ENCODE measurements at regions of chr5 and their contacts with region 1.

Region 1: DNA sequence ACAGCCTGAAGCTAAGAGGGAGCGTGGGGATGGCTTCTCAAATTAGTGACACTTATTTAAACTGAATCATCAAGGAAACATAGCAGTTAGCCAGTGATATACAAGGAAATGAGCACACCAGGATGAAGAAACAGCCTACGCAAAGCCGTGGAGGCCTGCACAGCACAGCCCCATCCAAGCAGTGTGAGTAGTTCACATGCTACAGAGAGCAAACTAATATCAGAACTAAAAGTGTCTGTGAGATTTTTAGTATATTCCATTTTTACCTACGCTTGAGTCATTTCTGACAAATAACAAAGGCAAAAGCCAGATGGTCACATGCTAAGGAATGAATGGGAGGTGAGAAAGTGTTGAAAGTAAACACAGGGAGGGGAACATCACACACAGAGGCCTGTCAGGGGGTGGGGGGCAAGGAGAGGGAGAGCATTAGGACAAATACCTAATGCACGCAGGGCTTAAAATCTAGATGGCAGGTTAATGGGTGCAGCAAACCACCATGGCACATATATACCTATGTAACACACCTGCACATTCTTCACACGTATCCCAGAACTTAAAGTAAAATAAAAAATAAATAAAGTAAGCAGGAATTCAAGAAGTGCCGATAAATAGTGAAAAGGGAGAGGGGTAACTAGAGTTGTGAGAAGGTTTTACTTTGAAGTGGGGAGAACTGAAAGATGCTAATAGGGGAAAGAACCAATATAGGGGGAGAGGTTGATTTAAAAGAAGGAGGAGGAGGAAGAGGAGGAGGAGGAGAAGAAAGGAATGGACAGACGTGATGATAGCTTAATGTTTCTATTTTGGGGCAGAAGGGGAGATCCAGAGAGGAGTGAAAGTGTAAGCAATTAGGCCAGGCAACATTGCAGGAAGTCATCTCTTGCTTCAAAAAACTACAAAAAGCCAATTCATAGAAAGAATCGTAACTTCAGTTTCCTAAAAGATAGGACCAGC is 100.9 kb upstream of the PTGER4 start:
- DNase-seq: peak; percentile 19
- H3K4me3 Mint-ChIP-seq: peak overlapping the region; percentile 59
- H3K27ac Mint-ChIP-seq: peak overlapping the region; percentile 87
- H3K4me1 Mint-ChIP-seq: peaks cover 36% of the 10 kb centered on the region
- H3K27me3 Mint-ChIP-seq: no peaks in the 10 kb centered on the region

Region 2: DNA sequence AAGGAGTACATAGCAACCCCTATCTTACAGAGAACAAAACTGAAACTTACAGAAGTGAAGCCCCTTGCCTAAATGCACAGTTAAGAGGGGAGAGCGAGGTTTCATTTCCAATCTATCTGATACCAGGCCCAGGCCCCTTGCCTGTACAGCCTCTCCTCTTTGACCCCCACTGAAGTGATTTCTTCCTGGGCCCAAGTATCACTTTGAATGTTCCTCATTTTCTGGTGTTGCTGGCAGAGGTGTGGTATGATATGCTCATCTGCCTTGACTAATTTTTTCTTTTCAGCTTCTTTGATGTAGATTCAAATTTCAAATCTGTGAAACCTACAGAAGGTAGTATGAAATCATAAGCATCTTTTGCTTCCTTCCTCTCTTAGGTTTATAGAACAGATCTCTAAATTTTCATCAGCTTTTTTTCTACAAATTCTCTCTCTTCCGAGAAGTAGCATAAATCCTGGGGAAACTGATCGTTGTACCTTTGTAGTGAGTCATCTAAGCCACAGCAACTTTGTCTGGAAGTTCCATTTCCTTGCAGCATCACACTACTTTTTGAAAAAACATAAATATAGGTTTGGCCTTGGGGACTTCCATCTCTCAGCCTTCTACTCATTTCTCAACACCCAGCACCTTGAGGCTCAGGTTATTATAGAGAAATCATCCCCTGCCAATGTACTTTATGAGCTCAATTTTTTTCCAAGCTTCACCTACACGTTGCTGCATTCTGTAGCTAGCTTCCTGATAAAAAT is 301.4 kb before region 1 on chr5:
- intact Hi-C with region 1: loop called (anchors 1 kb)
- DNase-seq: peak; percentile 22
- H3K4me3 Mint-ChIP-seq: peak overlapping the region; percentile 5
- H3K27ac Mint-ChIP-seq: peak overlapping the region; percentile 87
- H3K4me1 Mint-ChIP-seq: peaks cover 53% of the 10 kb centered on the region
- H3K27me3 Mint-ChIP-seq: no peaks in the 10 kb centered on the region

Region 3: DNA sequence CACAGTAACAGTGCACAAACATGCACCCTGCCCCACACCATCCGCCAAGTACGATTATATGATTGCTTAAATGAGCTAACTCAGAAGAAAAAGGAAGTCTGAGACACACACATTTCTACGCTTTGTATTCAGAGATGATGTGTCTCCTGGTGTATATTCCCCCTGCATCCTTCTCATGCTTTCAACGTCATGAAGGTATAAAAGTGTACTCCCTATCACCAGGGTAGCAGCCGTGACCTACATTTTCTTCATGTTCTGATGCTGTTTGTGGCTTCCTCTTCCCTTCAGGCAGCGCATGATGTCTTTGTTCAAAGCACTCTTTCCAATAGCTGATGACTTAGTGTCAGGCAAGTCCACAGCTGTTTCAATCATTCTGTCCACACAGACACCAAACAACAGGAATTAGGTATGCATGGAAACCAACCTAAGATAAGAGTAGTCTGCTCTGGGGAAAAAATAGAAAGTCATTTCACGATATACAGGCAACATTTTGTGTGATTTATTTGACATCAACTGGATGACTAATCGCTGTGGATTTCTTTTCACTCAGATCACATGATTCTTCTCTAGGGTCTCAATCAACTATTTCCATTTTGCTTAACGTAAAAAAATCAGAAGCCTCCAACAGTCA is 168.4 kb before region 1 on chr5:
- intact Hi-C with region 1: loop called (anchors 1 kb)
- DNase-seq: peak; percentile 65
- H3K4me3 Mint-ChIP-seq: peak overlapping the region; percentile 66
- H3K27ac Mint-ChIP-seq: peak overlapping the region; percentile 90
- H3K4me1 Mint-ChIP-seq: peaks cover 58% of the 10 kb centered on the region
- H3K27me3 Mint-ChIP-seq: no peaks in the 10 kb centered on the region

Region 4: GRCh38 chr5:40437452-40437861 is 141.3 kb before region 1 on chr5:
- intact Hi-C with region 1: loop called (anchors 2 kb)
- DNase-seq: no peak
- H3K4me3 Mint-ChIP-seq: no peak overlapping the region
- H3K27ac Mint-ChIP-seq: peak overlapping the region; percentile 77
- H3K4me1 Mint-ChIP-seq: peaks cover 74% of the 10 kb centered on the region
- H3K27me3 Mint-ChIP-seq: no peaks in the 10 kb centered on the region

Region 5: GRCh38 chr5:40594811-40595210 is 16.0 kb after region 1 on chr5:
- intact Hi-C with region 1: loop called (anchors 1 kb)
- DNase-seq: no peak
- H3K4me3 Mint-ChIP-seq: no peak overlapping the region
- H3K27ac Mint-ChIP-seq: no peak overlapping the region
- H3K4me1 Mint-ChIP-seq: peaks cover 30% of the 10 kb centered on the region
- H3K27me3 Mint-ChIP-seq: peaks cover 3% of the 10 kb centered on the region

Region 6: GRCh38 chr5:40652441-40653220 is 73.9 kb after region 1 on chr5:
- intact Hi-C with region 1: loop called (anchors 2 kb)
- DNase-seq: no peak
- H3K4me3 Mint-ChIP-seq: peak overlapping the region; percentile 83
- H3K27ac Mint-ChIP-seq: peak overlapping the region; percentile 72
- H3K4me1 Mint-ChIP-seq: peaks cover 75% of the 10 kb centered on the region
- H3K27me3 Mint-ChIP-seq: no peaks in the 10 kb centered on the region

Region 7: DNA sequence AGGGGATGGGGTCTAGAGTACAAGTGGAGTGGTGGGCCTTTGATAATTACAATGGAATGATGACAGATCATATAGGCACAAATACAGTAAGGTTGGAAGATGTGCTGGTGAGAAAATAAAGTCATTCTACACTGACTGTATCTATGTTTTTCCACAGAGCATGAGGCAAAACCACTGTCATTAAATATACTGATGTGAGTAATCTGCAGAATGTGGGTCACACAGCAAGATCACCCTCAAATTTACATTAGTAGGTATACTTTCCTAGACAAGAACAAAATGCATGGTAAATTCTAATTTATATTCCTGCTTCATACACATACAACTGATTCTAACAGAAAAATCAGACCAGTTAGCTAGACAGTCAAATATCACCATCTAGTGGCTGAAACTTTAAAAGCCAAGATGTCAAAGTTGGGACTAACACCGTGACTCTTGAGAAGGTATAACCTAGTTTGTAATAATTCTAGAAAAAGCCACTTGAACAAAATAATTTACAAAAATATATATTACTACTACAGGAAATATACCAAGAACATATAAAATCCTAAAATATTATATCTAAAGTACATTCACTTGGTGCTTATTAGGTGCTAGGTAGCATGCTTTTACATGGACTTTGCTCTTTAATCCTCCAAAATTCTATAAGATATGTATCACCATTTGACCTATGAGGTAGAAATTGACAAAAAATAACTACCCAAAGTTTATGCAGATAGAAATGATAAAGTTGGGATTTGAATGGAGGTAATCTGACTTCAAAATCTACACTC is 157.5 kb after region 1 on chr5:
- intact Hi-C with region 1: loop called (anchors 2 kb)
- DNase-seq: no peak
- H3K4me3 Mint-ChIP-seq: no peak overlapping the region
- H3K27ac Mint-ChIP-seq: peak overlapping the region; percentile 17
- H3K4me1 Mint-ChIP-seq: peaks cover 28% of the 10 kb centered on the region
- H3K27me3 Mint-ChIP-seq: no peaks in the 10 kb centered on the region

Measured in activated T-helper 2 cell treated with anti-CD3 and anti-CD28 coated beads, Interferon-gamma antibody, Interleukin-2, Interleukin-4, amounts not matched to agents 10 μg/mL and 5 μg/mL and 100 μg/mL, durations not matched to agents 14 hours and 24 hours and 36 hours (primary cell).